ENCODE measurements at regions of chr2 and their contacts with region 1.

Region 1: GRCh38 chr2:127526149-127527000 is at the start of gene IWS1:
- DNase-seq: peak; percentile 96 to 97
- H3K4me3 ChIP-seq: peak within 1 kb of the TSS; percentile 76
- H3K4me3 Mint-ChIP-seq: peak within 1 kb of the TSS; percentile 89
- H3K27ac Mint-ChIP-seq: peak within 1 kb of the TSS; percentile 95
- H3K4me1 ChIP-seq: peaks cover 29% of the 10 kb centered on the region
- H3K4me1 Mint-ChIP-seq: peaks cover 19% of the 10 kb centered on the region
- H3K27me3 ChIP-seq: no peaks in the 10 kb centered on the region
- H3K27me3 Mint-ChIP-seq: no peaks in the 10 kb centered on the region
- CTCF ChIP-seq: peak in 1 of 2 experiments; percentile 24
- total RNA-seq, gene IWS1: 56.0 and 63.7 TPM in 2 replicates

Region 2: GRCh38 chr2:127115471-127116065 is 410.8 kb before region 1 on chr2:
- CTCF ChIA-PET with region 1: no interaction called
- POLR2A ChIA-PET with region 1: no interaction called
- intact Hi-C with region 1: loop called (anchors 5 kb)
- DNase-seq: peak; percentile 89 to 95
- H3K4me3 ChIP-seq: peak overlapping the region; percentile 29; the same call in 1 of the 2 replicates
- H3K4me3 Mint-ChIP-seq: peak overlapping the region; percentile 65
- H3K27ac Mint-ChIP-seq: peak overlapping the region; percentile 60
- H3K4me1 ChIP-seq: peaks cover 54% of the 10 kb centered on the region
- H3K4me1 Mint-ChIP-seq: peaks cover 32% of the 10 kb centered on the region
- H3K27me3 ChIP-seq: no peaks in the 10 kb centered on the region
- H3K27me3 Mint-ChIP-seq: no peaks in the 10 kb centered on the region
- CTCF ChIP-seq: no peak

Region 3: GRCh38 chr2:127591221-127591923 is 65.0 kb after region 1 on chr2:
- CTCF ChIA-PET with region 1: interaction called, 6 read pairs
- POLR2A ChIA-PET with region 1: interaction called, 6 read pairs
- intact Hi-C with region 1: loop called (anchors 2 kb)
- DNase-seq: peak; percentile 72 to 76
- H3K4me3 ChIP-seq: no peak overlapping the region
- H3K4me3 Mint-ChIP-seq: no peak overlapping the region
- H3K27ac Mint-ChIP-seq: no peak overlapping the region
- H3K4me1 ChIP-seq: no peaks in the 10 kb centered on the region
- H3K4me1 Mint-ChIP-seq: no peaks in the 10 kb centered on the region
- H3K27me3 ChIP-seq: no peaks in the 10 kb centered on the region
- H3K27me3 Mint-ChIP-seq: peaks cover 7% of the 10 kb centered on the region
- CTCF ChIP-seq: peak; percentile 86 to 99

Region 4: GRCh38 chr2:127675331-127676261 is 149.2 kb after region 1 on chr2 and contains the start of gene LIMS2:
- CTCF ChIA-PET with region 1: no interaction called
- POLR2A ChIA-PET with region 1: interaction called, 11 read pairs
- intact Hi-C with region 1: no loop called
- DNase-seq: peak; percentile 67 to 74
- H3K4me3 ChIP-seq: peak within 1 kb of the TSS; percentile 56
- H3K4me3 Mint-ChIP-seq: peak within 1 kb of the TSS; percentile 83
- H3K27ac Mint-ChIP-seq: no peak within 1 kb of the TSS
- H3K4me1 ChIP-seq: peaks cover 6% of the 10 kb centered on the region; the same call in 1 of the 2 replicates
- H3K4me1 Mint-ChIP-seq: no peaks in the 10 kb centered on the region
- H3K27me3 ChIP-seq: peaks cover 1% of the 10 kb centered on the region; the same call in 1 of the 2 replicates
- H3K27me3 Mint-ChIP-seq: peaks cover 8% of the 10 kb centered on the region
- CTCF ChIP-seq: peak in 1 of 2 experiments; percentile 36
- total RNA-seq, gene LIMS2: 9.6 and 10.0 TPM in 2 replicates

Region 5: GRCh38 chr2:127913808-127914457 is 387.6 kb after region 1 on chr2:
- CTCF ChIA-PET with region 1: no interaction called
- POLR2A ChIA-PET with region 1: interaction called, 11 read pairs
- intact Hi-C with region 1: no loop called
- DNase-seq: no peak
- H3K4me3 ChIP-seq: no peak overlapping the region
- H3K4me3 Mint-ChIP-seq: no peak overlapping the region
- H3K27ac Mint-ChIP-seq: no peak overlapping the region
- H3K4me1 ChIP-seq: peaks cover 1% of the 10 kb centered on the region
- H3K4me1 Mint-ChIP-seq: peaks cover 1% of the 10 kb centered on the region
- H3K27me3 ChIP-seq: no peaks in the 10 kb centered on the region
- H3K27me3 Mint-ChIP-seq: no peaks in the 10 kb centered on the region
- CTCF ChIP-seq: no peak